Esophagus muscularis mucosa (tissue), 4 donors: ENCODE measurements at regions of chr17 and their contacts with region 1.

Region 1: DNA sequence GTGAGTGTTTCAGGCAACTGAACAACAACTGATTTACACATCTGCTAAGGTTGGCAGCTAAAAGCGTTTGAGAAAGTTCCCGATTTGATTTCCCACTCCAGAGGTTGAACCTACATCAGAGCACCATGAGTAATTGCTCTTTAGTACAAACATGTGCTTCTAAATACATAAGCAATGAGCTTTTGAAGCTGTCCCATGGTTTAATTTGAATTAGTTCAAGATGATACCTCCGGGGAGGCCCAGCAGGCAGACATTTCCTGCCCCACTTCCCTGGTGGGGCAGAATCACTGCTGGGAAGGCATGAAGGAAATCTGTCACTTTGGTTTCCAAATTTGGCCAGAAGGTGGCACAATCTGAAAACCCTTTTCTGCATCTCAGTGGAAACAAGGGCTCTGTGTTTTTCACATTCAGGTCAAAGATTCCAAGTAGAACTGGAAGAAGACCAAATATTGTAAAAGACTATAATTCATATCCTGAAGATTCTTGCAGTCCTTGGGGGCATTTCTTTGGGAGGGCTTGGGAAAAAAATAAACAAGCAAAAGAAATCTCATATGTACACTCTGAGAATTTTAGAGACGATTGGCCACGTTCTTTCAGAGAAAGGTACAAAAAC is 176.2 kb upstream of the FAM20A start:
- DNase-seq: no peak
- H3K4me3 ChIP-seq: no peak overlapping the region
- H3K27ac ChIP-seq: peak overlapping the region; percentile 8 to 52 (median 45)
- H3K4me1 ChIP-seq: peaks cover 10 to 30% (median 26%) of the 10 kb centered on the region in 4 donors
- H3K27me3 ChIP-seq: no peaks in the 10 kb centered on the region
- CTCF ChIP-seq: peak; percentile 53 to 61 (median 57)
- EP300 ChIP-seq: no peak
- POLR2A ChIP-seq: no peak

Region 2: GRCh38 chr17:68972119-68972704 is 194.9 kb after region 1 on chr17:
- intact Hi-C with region 1: loop called (anchors 5 kb)
- DNase-seq: no peak
- H3K4me3 ChIP-seq: no peak overlapping the region
- H3K27ac ChIP-seq: no peak overlapping the region
- H3K4me1 ChIP-seq: peaks cover 0 to 6% (median 2%) of the 10 kb centered on the region in 4 donors
- H3K27me3 ChIP-seq: peaks cover 0 to 12% (median 0%) of the 10 kb centered on the region in 4 donors
- CTCF ChIP-seq: peak; percentile 38 to 53 (median 42)
- EP300 ChIP-seq: no peak
- POLR2A ChIP-seq: no peak

Region 3: GRCh38 chr17:69246726-69247375 is 469.5 kb after region 1 on chr17:
- intact Hi-C with region 1: loop called (anchors 5 kb)
- DNase-seq: no peak
- H3K4me3 ChIP-seq: no peak overlapping the region
- H3K27ac ChIP-seq: no peak overlapping the region
- H3K4me1 ChIP-seq: no peaks in the 10 kb centered on the region
- H3K27me3 ChIP-seq: no peaks in the 10 kb centered on the region
- CTCF ChIP-seq: peak; percentile 49 to 63 (median 54)
- EP300 ChIP-seq: no peak
- POLR2A ChIP-seq: no peak